ENCODE measurements at regions of chr10 and their contacts with region 1.

Region 1: DNA sequence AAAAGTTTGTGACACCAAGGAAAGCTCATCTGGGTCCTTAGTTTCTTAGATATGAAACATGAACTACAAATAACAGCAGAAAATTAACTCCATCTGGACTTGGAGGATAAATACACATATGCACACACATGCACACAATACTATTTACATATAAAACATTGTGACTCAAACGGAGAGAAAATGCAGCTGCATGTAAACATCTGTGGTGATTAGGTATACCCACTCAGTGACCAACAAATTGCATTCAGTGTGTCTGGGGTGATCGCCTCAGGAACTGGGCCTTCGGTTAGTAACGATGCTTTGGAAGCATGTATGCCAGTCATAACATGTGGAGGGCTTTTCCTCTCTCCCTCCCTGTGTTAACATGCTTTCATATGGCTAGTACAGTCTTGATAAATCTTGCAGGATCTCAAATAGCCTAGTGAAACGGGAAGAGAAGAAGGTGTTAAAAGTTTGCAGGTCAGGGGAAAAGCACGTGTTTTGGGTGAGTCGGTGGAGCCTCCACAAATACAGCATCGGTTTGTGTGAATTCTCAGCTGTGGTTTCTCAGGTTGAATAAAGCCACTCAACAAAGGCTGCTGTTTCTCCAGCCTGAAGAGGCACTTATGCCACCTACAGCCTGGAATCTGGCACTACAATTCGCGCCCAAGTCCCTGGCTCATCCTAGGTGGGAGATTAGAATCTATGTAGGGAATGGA is 8.7 kb upstream of the GLRX3 start:
- DNase-seq: peak; percentile 44
- H3K4me3 Mint-ChIP-seq: no peak overlapping the region
- H3K27ac Mint-ChIP-seq: no peak overlapping the region
- H3K4me1 Mint-ChIP-seq: peaks cover 9% of the 10 kb centered on the region
- H3K27me3 Mint-ChIP-seq: peaks cover 42% of the 10 kb centered on the region

Region 2: GRCh38 chr10:129030996-129031843 is 1096.3 kb before region 1 on chr10:
- intact Hi-C with region 1: loop called (anchors 2 kb)
- DNase-seq: peak; percentile 23
- H3K4me3 Mint-ChIP-seq: no peak overlapping the region
- H3K27ac Mint-ChIP-seq: no peak overlapping the region
- H3K4me1 Mint-ChIP-seq: peaks cover 13% of the 10 kb centered on the region
- H3K27me3 Mint-ChIP-seq: peaks cover 20% of the 10 kb centered on the region

Region 3: GRCh38 chr10:129888784-129889616 is 238.5 kb before region 1 on chr10:
- intact Hi-C with region 1: loop called (anchors 1 kb)
- DNase-seq: no peak
- H3K4me3 Mint-ChIP-seq: no peak overlapping the region
- H3K27ac Mint-ChIP-seq: no peak overlapping the region
- H3K4me1 Mint-ChIP-seq: no peaks in the 10 kb centered on the region
- H3K27me3 Mint-ChIP-seq: peaks cover 1% of the 10 kb centered on the region

Region 4: DNA sequence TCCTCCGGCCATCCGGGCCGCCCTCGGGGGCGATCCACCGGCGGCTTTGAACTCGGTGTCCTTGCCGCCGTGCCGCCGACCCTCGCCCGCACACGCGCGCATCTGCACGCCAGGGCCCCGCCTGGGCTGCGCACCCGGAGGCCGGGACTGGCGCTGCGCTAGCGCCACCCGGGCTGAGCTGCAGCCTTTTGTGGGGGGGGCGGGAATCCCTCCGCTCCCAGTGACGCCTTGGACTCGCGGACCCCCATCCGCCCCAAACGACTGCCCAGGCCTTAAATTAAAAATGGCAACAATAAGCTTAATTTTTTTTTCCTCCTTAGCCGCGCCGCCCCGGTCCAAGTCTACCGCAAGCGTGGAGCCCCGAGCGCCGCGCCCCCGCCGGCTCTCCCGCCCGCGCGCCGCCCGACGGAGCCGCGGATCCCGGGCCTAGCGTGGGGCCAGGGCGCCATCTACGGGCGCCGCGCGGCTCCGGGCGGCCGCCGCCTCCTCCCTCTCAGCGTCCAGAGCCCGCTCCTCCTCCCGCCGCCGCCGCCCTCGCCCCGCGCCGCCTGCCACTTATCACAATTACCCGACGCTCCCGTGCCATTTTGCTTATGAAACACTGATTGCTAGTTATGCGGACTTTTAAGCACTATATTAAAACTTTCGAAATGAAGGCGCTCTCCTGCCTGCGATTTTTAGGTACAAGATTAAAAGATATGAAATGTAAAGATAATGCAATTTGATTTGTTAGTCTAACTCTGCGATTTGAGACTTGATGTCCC is 155.9 kb before region 1 on chr10:
- intact Hi-C with region 1: loop called (anchors 1 kb)
- DNase-seq: no peak
- H3K4me3 Mint-ChIP-seq: peak overlapping the region; percentile 58
- H3K27ac Mint-ChIP-seq: peak overlapping the region; percentile 88
- H3K4me1 Mint-ChIP-seq: peaks cover 13% of the 10 kb centered on the region
- H3K27me3 Mint-ChIP-seq: peaks cover 38% of the 10 kb centered on the region

Region 5: DNA sequence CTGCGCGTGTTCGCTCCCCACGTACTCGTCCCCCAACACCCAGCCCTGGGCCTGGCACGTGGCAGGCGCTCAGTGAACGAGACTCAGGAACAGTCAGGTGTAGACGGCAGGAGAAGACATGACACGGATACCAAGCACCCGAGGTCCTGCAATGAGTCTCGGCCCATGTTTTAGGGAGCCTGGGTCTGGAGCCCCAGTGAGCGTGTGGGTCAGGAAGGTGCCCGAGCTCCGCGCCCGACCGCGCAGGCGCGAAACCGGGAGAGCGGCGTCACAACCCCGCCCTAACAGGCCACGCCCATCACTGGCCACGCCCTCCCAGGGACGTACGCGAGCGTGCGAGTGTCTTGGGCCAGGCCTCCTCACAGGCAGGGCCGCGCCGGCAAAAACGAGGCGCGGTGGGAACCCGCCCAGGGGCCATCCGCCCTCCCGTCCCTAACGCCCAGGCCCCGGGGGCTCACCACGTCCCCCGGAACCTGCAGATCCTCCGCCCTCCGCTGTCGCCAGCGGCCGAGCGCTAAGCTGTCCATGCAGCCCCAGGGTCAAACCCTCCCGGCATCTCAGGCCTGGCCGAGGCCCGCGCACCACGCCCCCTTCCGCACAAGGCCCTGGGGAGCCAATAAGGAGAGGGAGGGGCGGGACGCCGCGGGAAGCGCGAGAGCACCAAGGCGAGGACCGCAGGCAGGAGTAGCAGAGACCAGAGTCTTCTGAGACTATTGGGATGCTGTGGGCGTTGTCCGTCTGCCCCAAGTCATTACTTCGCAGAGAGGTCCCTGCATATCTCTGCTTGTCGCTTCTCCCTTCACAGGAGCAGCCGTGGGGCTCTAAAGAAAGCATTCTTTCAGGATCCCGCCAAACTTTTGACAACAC is 17.0 kb before region 1 on chr10 and contains the start of gene C10orf143:
- intact Hi-C with region 1: loop called (anchors 1 kb)
- DNase-seq: peak; percentile 98
- H3K4me3 Mint-ChIP-seq: peak within 1 kb of the TSS; percentile 95
- H3K27ac Mint-ChIP-seq: peak within 1 kb of the TSS; percentile 99
- H3K4me1 Mint-ChIP-seq: peaks cover 60% of the 10 kb centered on the region
- H3K27me3 Mint-ChIP-seq: no peaks in the 10 kb centered on the region
- total RNA-seq, gene C10orf143: 3.3 and 3.6 TPM in 2 replicates

Measured in activated T-helper 1 cell treated with anti-CD3 and anti-CD28 coated beads, Interleukin-12 subunit alpha, Interleukin-12 subunit beta, Interleukin-2, Interleukin-4 antibody, amounts not matched to agents 30 ng/mL and 10 ng/mL and 1 ng/mL, durations not matched to agents 14 hours and 24 hours and 36 hours (primary cell).